ENCODE measurements at regions of chr1 and their contacts with region 1.

Region 1: GRCh38 chr1:150053926-150054325 is 13.7 kb upstream of the VPS45 start:
- DNase-seq: no peak
- ATAC-seq: no peak
- H3K4me3 ChIP-seq: no peak overlapping the region
- H3K27ac ChIP-seq: no peak overlapping the region
- H3K4me1 ChIP-seq: no peaks in the 10 kb centered on the region; a peak in 1 of 5 replicates
- H3K27me3 ChIP-seq: no peaks in the 10 kb centered on the region
- CTCF ChIP-seq: no peak
- EP300 ChIP-seq: no peak
- POLR2A ChIP-seq: no peak
- RAD21 ChIP-seq: no peak

Region 2: DNA sequence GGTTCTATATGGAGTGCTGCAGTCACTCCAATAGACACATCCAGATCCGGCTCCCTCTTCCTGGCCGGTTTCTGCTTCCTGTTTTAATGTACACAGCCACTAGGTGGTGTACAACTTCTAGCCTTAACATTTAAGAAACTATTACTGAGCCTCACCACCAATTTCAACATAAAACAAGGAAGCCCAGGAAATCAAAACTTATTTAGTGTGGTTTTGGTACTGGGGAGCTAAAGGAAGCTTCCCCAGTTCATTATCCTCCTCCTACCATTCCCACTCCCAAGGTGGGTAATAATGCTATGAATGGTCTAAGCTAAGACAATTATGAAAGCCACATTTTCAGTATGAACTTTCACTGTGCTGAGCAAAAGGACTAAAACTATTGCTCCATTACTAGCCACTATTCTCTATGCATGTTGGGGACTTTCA is 91.8 kb before region 1 on chr1:
- CTCF ChIA-PET with region 1: interaction called, 33 read pairs
- POLR2A ChIA-PET with region 1: interaction called, 4 read pairs
- in situ Hi-C with region 1: loop called (anchors 5 kb)
- intact Hi-C with region 1: loop called (anchors 1 kb)
- DNase-seq: peak; percentile 52 to 79 (median 70)
- ATAC-seq: peak; percentile 96
- H3K4me3 ChIP-seq: no peak overlapping the region
- H3K27ac ChIP-seq: no peak overlapping the region
- H3K4me1 ChIP-seq: no peaks in the 10 kb centered on the region
- H3K27me3 ChIP-seq: no peaks in the 10 kb centered on the region
- CTCF ChIP-seq: peak; percentile 70 to 85 (median 77)
- EP300 ChIP-seq: no peak
- POLR2A ChIP-seq: no peak
- RAD21 ChIP-seq: peak; percentile 87 to 90

Region 3: DNA sequence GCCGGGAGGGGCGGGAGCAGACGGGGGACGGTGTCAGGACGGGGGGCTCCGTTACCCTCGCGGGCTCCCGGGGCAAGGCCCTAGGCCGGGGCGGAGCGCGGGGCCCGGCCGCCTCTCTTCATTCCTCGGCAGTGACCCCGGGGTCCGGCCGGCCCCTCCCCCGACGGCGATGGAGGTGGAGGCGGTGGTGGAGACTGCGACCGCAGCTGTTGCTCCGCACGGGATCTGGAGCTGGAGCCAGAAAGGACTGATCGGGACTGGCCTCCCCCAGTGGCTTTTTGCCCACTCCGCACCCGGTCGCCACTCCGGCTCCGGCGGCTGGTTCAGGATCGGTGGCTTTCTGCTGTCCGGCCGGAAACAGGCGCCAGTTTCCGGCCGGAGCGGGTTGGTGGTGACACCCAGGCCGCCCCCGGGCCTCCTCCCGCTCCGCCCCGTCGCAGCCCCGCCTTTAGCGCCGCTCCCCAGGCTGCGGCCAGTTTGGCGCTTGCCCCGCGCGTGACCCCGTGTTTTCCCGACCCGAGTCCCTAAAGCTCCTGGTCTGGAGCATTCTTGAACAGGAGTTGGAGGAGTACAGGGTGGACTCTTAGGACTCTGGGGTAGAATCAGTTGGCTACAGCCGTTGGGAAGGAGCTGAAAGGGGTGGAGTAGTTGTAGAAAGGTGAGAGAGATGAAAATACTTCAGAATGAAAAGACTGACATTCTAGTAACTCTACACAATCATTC is 43.4 kb before region 1 on chr1 and contains the start of gene OTUD7B:
- CTCF ChIA-PET with region 1: no interaction called
- POLR2A ChIA-PET with region 1: no interaction called
- in situ Hi-C with region 1: no loop called
- intact Hi-C with region 1: loop called (anchors 5 kb)
- DNase-seq: peak; percentile 89 to 95 (median 92)
- ATAC-seq: peak; percentile 84
- H3K4me3 ChIP-seq: peak within 1 kb of the TSS; percentile 81
- H3K27ac ChIP-seq: peak within 1 kb of the TSS; percentile 90
- H3K4me1 ChIP-seq: peaks cover 0 to 44% of the 10 kb centered on the region in 2 experiments; a peak in 3 of 5 replicates
- H3K27me3 ChIP-seq: no peaks in the 10 kb centered on the region
- CTCF ChIP-seq: no peak; a peak in 2 of 6 replicates
- EP300 ChIP-seq: peak; percentile 67
- POLR2A ChIP-seq: peak; percentile 80
- RAD21 ChIP-seq: no peak
- polyA plus RNA-seq, gene OTUD7B: 0.96 TPM